ENCODE measurements at regions of chr20 and their contacts with region 1.

Region 1: DNA sequence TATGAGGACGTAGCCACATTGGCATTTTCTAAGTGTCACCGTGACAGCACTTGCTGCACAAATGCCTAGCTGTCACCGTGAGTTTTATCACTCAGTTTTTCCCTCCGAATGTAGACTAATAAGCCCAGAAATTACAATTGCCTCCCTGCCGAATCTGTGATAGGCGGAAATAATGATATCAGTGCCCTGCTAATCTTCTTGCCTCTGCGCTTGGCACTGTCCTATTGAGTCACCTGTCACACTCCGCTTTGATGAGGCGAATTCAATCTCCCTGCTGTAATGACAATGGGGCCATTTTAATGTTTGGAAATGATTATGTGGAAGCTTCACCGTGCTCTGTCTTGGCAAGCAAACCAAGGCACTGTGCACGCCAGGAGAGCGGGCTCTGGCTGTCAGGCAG is 112.8 kb downstream of the LINC00237 start:
- DNase-seq: no peak
- ATAC-seq: no peak
- H3K4me3 ChIP-seq: no peak overlapping the region
- H3K27ac ChIP-seq: no peak overlapping the region
- H3K4me1 ChIP-seq: no peaks in the 10 kb centered on the region
- H3K27me3 ChIP-seq: peaks cover 0 to 29% (median 25%) of the 10 kb centered on the region in 7 donors
- CTCF ChIP-seq: no peak

Region 2: GRCh38 chr20:20630556-20630955 is 362.8 kb before region 1 on chr20:
- intact Hi-C with region 1: loop called in 1 of 10 experiments (anchors 5 kb)
- DNase-seq: no peak
- ATAC-seq: no peak
- H3K4me3 ChIP-seq: no peak overlapping the region
- H3K27ac ChIP-seq: no peak overlapping the region
- H3K4me1 ChIP-seq: no peaks in the 10 kb centered on the region
- H3K27me3 ChIP-seq: no peaks in the 10 kb centered on the region
- CTCF ChIP-seq: no peak

Region 3: DNA sequence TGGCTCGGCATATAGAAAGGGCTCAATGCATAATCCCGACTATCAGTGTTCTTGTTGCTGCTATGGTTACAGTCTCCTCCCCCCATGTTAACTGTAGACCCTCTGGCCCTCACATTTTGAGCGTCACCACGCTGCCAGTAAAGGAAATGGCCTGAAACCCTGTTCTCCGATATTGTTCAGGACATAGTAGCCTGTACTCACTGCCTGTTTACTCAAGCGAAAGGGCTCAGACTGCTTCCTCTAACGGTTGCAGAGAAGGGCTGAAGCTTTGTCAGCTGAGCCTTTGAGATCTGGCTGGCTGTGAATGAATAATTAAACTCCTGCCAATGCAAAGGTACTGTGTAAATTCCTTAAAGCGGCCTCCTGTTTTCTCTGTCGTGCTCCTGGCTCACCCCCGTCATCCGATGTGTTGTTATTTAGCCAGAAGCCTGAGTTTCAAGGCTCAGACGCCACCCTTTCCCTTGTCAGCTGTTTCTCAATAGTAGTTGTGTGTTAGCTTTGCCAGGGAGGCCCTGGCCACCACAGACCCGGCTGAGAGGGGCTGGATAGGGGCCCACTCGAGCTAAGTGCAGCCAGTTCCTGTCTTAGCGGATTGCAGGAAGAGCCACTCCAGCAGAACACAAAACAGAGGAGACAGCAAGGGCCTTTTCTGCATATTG is 249.7 kb before region 1 on chr20:
- intact Hi-C with region 1: no loop called
- DNase-seq: peak; percentile 70 to 78
- ATAC-seq: peak; percentile 90 to 94 (median 92)
- H3K4me3 ChIP-seq: peak overlapping the region in 5 of 10 donors; percentile 8 to 27 (median 14)
- H3K27ac ChIP-seq: peak overlapping the region; percentile 77 to 98 (median 86)
- H3K4me1 ChIP-seq: peaks cover 14 to 46% (median 29%) of the 10 kb centered on the region in 9 donors
- H3K27me3 ChIP-seq: no peaks in the 10 kb centered on the region
- CTCF ChIP-seq: no peak

Region 4: GRCh38 chr20:20939006-20939405 is 54.4 kb before region 1 on chr20:
- intact Hi-C with region 1: loop called in 1 of 10 experiments (anchors 10 kb)
- DNase-seq: no peak
- ATAC-seq: no peak
- H3K4me3 ChIP-seq: no peak overlapping the region
- H3K27ac ChIP-seq: no peak overlapping the region
- H3K4me1 ChIP-seq: no peaks in the 10 kb centered on the region
- H3K27me3 ChIP-seq: peaks cover 0 to 7% (median 0%) of the 10 kb centered on the region in 7 donors
- CTCF ChIP-seq: no peak

Measured in heart right ventricle (tissue), 16 donors.